Activated T-helper 2 cell treated with anti-CD3 and anti-CD28 coated beads, Interferon-gamma antibody, Interleukin-2, Interleukin-4, amounts not matched to agents 10 μg/mL and 5 μg/mL and 100 μg/mL, durations not matched to agents 14 hours and 24 hours and 36 hours (primary cell): ENCODE measurements at regions of chr20 and their contacts with region 1.

Region 1: DNA sequence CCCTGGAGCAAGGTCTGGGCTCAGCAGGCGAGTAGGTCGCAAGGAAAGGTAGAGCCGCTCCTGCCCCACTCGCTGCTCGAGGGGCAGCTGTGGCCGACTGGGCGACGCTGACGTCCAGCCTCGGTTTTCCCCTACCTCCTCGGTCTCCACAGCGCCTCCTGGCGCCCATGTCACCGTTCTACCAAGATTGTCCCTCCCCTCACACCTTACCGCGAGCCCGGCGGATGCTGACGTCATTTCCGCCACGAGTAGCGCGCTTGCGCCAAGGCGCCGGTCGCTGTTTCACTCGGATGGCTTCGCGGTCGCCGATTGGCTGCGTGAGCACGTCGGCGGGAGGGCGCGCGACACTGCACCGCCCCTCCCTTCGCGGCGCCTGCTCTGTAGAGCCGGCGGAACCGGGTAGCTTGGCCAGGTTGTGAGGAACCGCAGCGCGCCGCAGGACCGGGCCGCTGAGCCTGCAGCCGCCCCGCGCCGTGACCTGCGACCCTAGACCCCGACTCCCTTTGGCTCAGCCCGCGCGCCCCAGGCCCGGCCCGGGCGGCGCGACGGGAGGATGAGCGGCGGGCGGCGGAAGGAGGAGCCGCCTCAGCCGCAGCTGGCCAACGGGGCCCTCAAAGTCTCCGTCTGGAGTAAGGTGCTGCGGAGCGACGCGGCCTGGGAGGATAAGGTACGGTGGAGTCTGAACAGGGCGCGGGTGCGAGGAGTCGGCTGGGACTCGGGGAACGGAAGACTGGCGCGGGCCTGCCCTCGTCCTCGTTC is at the start of gene RAB5IF:
- DNase-seq: peak; percentile 100
- H3K4me3 Mint-ChIP-seq: peak within 1 kb of the TSS; percentile 99
- H3K27ac Mint-ChIP-seq: peak within 1 kb of the TSS; percentile 95
- H3K4me1 Mint-ChIP-seq: peaks cover 21% of the 10 kb centered on the region
- H3K27me3 Mint-ChIP-seq: no peaks in the 10 kb centered on the region
- total RNA-seq, gene RAB5IF: 94.5 and 99.0 TPM in 2 replicates

Region 2: GRCh38 chr20:36550797-36551299 is 54.7 kb before region 1 on chr20:
- intact Hi-C with region 1: loop called (anchors 5 kb)
- DNase-seq: no peak
- H3K4me3 Mint-ChIP-seq: no peak overlapping the region
- H3K27ac Mint-ChIP-seq: no peak overlapping the region
- H3K4me1 Mint-ChIP-seq: peaks cover 2% of the 10 kb centered on the region
- H3K27me3 Mint-ChIP-seq: no peaks in the 10 kb centered on the region

Region 3: GRCh38 chr20:36591854-36592641 is 13.5 kb before region 1 on chr20:
- intact Hi-C with region 1: loop called (anchors 1 kb)
- DNase-seq: peak; percentile 44
- H3K4me3 Mint-ChIP-seq: peak overlapping the region; percentile 48
- H3K27ac Mint-ChIP-seq: peak overlapping the region; percentile 62
- H3K4me1 Mint-ChIP-seq: peaks cover 54% of the 10 kb centered on the region
- H3K27me3 Mint-ChIP-seq: no peaks in the 10 kb centered on the region

Region 4: GRCh38 chr20:36645998-36646397 is 40.4 kb after region 1 on chr20 and contains the start of gene SLA2:
- intact Hi-C with region 1: loop called (anchors 2 kb)
- DNase-seq: peak; percentile 60
- H3K4me3 Mint-ChIP-seq: peak within 1 kb of the TSS; percentile 96
- H3K27ac Mint-ChIP-seq: peak within 1 kb of the TSS; percentile 99
- H3K4me1 Mint-ChIP-seq: peaks cover 50% of the 10 kb centered on the region
- H3K27me3 Mint-ChIP-seq: no peaks in the 10 kb centered on the region
- total RNA-seq, gene SLA2: 54.9 and 56.5 TPM in 2 replicates

Region 5: DNA sequence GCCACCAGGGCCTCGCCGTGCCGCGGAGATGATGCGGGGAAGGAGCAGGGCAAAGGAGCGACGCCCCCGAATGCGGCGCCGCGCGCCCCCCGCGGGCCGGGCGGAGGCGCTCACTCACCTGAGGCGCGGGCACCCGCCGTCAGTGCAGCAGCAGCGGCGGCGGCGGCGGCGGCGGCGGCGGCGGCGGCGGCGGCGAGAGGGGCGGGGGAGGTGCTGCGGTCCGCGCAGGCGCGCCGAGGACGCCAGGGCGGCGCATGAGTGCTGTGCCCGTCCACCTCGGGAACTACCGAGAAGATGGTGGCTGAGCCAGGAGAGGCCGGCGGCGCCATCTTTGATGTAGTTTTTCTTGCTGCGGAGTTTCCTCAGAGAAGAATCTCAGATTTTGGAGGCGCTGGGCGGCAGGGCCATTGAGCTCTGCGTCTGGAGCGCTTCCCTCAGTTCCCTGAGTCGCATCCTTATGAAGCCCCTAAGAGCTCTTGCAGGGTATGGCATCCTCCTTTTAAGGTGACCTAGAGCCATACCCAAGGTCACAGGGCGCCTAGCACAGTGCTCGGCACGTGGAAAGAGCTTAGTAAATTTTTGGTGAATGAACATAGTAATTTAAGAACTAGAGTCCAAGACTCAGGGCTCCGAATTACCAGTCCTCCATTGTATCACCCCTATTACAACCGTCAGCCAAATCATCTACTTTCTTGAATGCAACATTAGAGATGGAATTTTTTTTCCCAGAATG is 140.5 kb after region 1 on chr20 and contains the start of gene NDRG3:
- intact Hi-C with region 1: no loop called
- DNase-seq: peak; percentile 90
- H3K4me3 Mint-ChIP-seq: peak within 1 kb of the TSS; percentile 85
- H3K27ac Mint-ChIP-seq: peak within 1 kb of the TSS; percentile 72
- H3K4me1 Mint-ChIP-seq: peaks cover 24% of the 10 kb centered on the region
- H3K27me3 Mint-ChIP-seq: no peaks in the 10 kb centered on the region
- total RNA-seq, gene NDRG3: 26.0 and 26.8 TPM in 2 replicates